Colonic mucosa (tissue), 4 donors: ENCODE measurements at regions of chr15 and their contacts with region 1.

Region 1: GRCh38 chr15:41323611-41324010 is 8.8 kb downstream of the OIP5 start:
- DNase-seq: no peak
- H3K4me3 ChIP-seq: no peak overlapping the region
- H3K27ac ChIP-seq: no peak overlapping the region
- H3K4me1 ChIP-seq: no peaks in the 10 kb centered on the region
- H3K27me3 ChIP-seq: no peaks in the 10 kb centered on the region
- CTCF ChIP-seq: no peak

Region 2: DNA sequence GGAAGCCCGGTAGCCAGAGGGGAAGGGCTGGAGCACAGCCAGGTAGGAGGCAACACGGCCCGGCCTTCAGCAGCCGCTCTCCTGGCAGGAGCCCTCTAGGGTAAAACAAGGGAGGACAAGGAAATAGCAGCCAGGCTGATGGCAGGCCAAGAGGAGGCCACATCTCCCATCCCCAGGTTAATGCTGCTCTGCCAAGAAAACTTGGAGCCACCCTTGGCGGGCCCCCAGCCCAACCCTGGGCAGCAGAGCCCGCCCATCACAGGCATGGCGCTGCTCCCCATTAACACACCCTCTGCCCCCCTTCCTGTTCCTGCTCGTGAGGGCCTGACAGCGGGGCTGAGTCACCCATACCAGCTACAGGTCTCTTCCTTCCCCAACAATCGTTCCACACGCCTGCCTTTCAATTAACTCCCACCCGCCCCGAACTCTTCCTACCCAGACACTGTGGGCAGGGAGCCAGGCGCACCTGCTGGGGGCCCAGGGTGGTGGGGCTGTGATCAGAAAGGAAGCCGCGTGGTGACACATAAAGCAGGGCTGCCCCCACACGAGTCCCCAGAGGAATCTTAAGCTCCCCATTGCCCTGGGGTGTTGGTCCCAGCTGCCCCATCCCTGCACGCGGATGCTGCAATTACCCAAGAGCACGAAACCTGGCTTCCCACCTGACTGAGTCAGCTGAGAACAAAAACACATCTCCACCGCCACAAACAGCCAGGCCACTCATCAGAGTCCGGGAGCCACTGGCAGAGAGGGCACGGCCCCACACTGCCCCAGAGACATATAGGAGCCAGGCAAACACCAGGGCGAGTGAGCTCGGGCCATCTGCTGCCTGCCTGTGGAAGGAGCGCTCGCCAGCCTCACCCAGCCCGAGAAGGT is 554.1 kb before region 1 on chr15 and contains the start of gene C15orf62:
- intact Hi-C with region 1: no loop called
- DNase-seq: peak; percentile 76
- H3K4me3 ChIP-seq: peak within 1 kb of the TSS; percentile 15
- H3K27ac ChIP-seq: peak within 1 kb of the TSS; percentile 90
- H3K4me1 ChIP-seq: peaks cover 29% of the 10 kb centered on the region
- H3K27me3 ChIP-seq: no peaks in the 10 kb centered on the region
- CTCF ChIP-seq: no peak
- total RNA-seq, gene C15orf62: 0.74 to 0.80 TPM

Region 3: GRCh38 chr15:41276821-41277220 is 46.8 kb before region 1 on chr15:
- intact Hi-C with region 1: loop called (anchors 10 kb)
- DNase-seq: no peak
- H3K4me3 ChIP-seq: no peak overlapping the region
- H3K27ac ChIP-seq: no peak overlapping the region
- H3K4me1 ChIP-seq: no peaks in the 10 kb centered on the region
- H3K27me3 ChIP-seq: no peaks in the 10 kb centered on the region
- CTCF ChIP-seq: no peak